ENCODE measurements at regions of chr12 and their contacts with region 1.

Region 1: DNA sequence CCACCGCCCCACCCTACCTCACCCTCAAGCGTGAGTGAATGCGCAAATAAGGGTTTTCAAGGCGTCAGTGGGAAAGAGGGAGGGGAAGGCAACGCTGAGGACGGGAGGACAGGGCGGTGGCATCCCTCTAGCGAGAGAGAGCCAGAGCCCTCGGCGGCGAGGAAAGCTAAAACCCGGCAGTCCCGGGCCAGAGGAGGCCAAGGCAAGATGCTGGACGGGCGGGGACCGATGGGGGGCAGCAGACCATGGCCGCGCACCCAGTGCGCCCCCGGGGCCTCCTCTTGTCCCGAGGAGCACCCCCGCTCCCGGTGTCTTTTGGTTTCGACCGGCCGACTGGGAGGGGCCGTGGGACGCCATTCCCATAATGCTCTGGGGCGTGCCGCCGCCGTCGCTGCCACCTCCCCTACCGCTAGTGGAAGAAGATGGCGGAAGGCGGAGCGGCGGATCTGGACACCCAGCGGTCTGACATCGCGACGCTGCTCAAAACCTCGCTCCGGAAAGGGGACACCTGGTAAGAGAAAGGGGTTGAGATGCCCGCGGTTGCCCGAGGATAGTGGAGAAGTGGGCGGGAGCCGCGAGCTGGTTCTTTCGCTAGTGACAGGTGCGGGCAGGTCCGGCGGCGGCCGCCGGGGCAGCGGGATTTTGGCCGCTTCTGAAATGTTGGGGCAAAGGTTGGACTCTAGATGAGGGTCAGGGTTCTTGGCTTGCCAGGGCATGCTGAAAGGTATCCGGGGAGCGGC is at the start of gene USP15:
- DNase-seq: peak; percentile 93 to 98 (median 96)
- ATAC-seq: peak; percentile 76
- H3K4me3 ChIP-seq: peak within 1 kb of the TSS; percentile 78 to 92
- H3K4me3 Mint-ChIP-seq: peak within 1 kb of the TSS; percentile 95
- H3K27ac ChIP-seq: peak within 1 kb of the TSS; percentile 92 to 97
- H3K27ac Mint-ChIP-seq: peak within 1 kb of the TSS; percentile 99
- H3K4me1 ChIP-seq: peaks cover 58% of the 10 kb centered on the region
- H3K4me1 Mint-ChIP-seq: peaks cover 64% of the 10 kb centered on the region
- H3K27me3 ChIP-seq: no peaks in the 10 kb centered on the region
- H3K27me3 Mint-ChIP-seq: no peaks in the 10 kb centered on the region
- CTCF ChIP-seq: peak; percentile 16
- total RNA-seq, gene USP15: 213 to 224 TPM

Region 2: DNA sequence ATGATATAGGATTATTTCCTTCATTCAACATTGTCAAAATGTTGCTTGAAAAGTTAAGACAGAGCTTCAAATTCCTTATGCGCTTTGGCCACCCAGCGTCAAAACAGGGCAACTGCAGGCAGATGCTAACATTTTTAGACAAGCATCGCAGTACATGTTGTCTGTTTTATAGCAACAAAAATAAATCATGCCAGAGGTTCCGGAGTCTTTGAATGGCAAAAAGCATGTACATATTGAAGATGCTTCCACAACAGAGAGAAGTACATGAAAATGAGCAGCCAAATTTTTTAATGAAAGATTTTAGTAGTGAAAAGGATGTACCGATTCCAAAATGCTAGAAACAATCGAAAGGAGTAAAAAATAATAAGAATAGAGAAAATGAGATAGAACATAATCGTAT is 49.7 kb before region 1 on chr12:
- CTCF ChIA-PET with region 1: no interaction called
- POLR2A ChIA-PET with region 1: interaction called, 4 read pairs
- intact Hi-C with region 1: loop called in 1 of 2 experiments (anchors 5 kb)
- DNase-seq: peak in 7 of 9 experiments; percentile 18 to 56 (median 39)
- ATAC-seq: peak; percentile 70
- H3K4me3 ChIP-seq: no peak overlapping the region
- H3K4me3 Mint-ChIP-seq: no peak overlapping the region
- H3K27ac ChIP-seq: no peak overlapping the region
- H3K27ac Mint-ChIP-seq: no peak overlapping the region
- H3K4me1 ChIP-seq: peaks cover 6% of the 10 kb centered on the region
- H3K4me1 Mint-ChIP-seq: peaks cover 9% of the 10 kb centered on the region
- H3K27me3 ChIP-seq: no peaks in the 10 kb centered on the region
- H3K27me3 Mint-ChIP-seq: no peaks in the 10 kb centered on the region
- CTCF ChIP-seq: peak; percentile 89

Region 3: GRCh38 chr12:62301080-62301798 is 41.1 kb after region 1 on chr12:
- CTCF ChIA-PET with region 1: no interaction called
- POLR2A ChIA-PET with region 1: no interaction called
- intact Hi-C with region 1: loop called (anchors 5 kb)
- DNase-seq: no peak
- ATAC-seq: no peak
- H3K4me3 ChIP-seq: no peak overlapping the region
- H3K4me3 Mint-ChIP-seq: no peak overlapping the region
- H3K27ac ChIP-seq: no peak overlapping the region
- H3K27ac Mint-ChIP-seq: no peak overlapping the region
- H3K4me1 ChIP-seq: no peaks in the 10 kb centered on the region
- H3K4me1 Mint-ChIP-seq: peaks cover 66% of the 10 kb centered on the region
- H3K27me3 ChIP-seq: no peaks in the 10 kb centered on the region
- H3K27me3 Mint-ChIP-seq: no peaks in the 10 kb centered on the region
- CTCF ChIP-seq: no peak

Region 4: DNA sequence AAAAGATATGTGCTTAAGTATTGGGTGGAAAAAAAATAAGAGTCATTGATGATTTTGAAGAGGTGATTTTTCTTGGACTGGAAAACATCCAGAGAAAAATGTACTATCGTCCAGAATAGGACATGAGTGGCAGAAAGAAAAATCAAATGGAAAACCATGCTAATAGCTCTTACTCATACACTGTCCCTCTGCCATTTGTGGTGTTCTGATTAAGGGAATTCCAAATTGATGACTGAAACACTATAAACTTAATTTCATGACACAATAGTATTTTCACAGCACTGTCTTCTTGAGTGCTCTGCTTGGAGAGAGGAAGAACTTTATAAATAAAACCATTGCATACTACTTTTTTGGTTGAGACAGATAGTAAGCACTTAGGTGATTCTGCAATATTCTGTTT is 72.4 kb after region 1 on chr12:
- CTCF ChIA-PET with region 1: no interaction called
- POLR2A ChIA-PET with region 1: no interaction called
- intact Hi-C with region 1: loop called in 1 of 2 experiments (anchors 5 kb)
- DNase-seq: no peak
- ATAC-seq: no peak
- H3K4me3 ChIP-seq: no peak overlapping the region
- H3K4me3 Mint-ChIP-seq: no peak overlapping the region
- H3K27ac ChIP-seq: no peak overlapping the region
- H3K27ac Mint-ChIP-seq: no peak overlapping the region
- H3K4me1 ChIP-seq: no peaks in the 10 kb centered on the region
- H3K4me1 Mint-ChIP-seq: peaks cover 43% of the 10 kb centered on the region
- H3K27me3 ChIP-seq: no peaks in the 10 kb centered on the region
- H3K27me3 Mint-ChIP-seq: no peaks in the 10 kb centered on the region
- CTCF ChIP-seq: no peak

Region 5: GRCh38 chr12:62466594-62467491 is 206.7 kb after region 1 on chr12 and contains the start of gene MON2:
- CTCF ChIA-PET with region 1: no interaction called
- POLR2A ChIA-PET with region 1: interaction called, 7 read pairs
- intact Hi-C with region 1: loop called (anchors 1 to 5 kb)
- DNase-seq: peak; percentile 71 to 94 (median 86)
- ATAC-seq: peak; percentile 92
- H3K4me3 ChIP-seq: peak within 1 kb of the TSS; percentile 96 to 98
- H3K4me3 Mint-ChIP-seq: peak within 1 kb of the TSS; percentile 92
- H3K27ac ChIP-seq: peak within 1 kb of the TSS; percentile 85 to 96
- H3K27ac Mint-ChIP-seq: peak within 1 kb of the TSS; percentile 93
- H3K4me1 ChIP-seq: peaks cover 31% of the 10 kb centered on the region
- H3K4me1 Mint-ChIP-seq: peaks cover 29% of the 10 kb centered on the region
- H3K27me3 ChIP-seq: peaks cover 0 to 2% of the 10 kb centered on the region in 2 experiments
- H3K27me3 Mint-ChIP-seq: no peaks in the 10 kb centered on the region
- CTCF ChIP-seq: no peak
- total RNA-seq, gene MON2: 44.2 to 48.9 TPM

Region 6: GRCh38 chr12:62581288-62582064 is 321.3 kb after region 1 on chr12:
- CTCF ChIA-PET with region 1: no interaction called
- POLR2A ChIA-PET with region 1: no interaction called
- intact Hi-C with region 1: no loop called
- DNase-seq: peak in 2 of 9 experiments; percentile 53 to 67
- ATAC-seq: peak; percentile 59
- H3K4me3 ChIP-seq: no peak overlapping the region
- H3K4me3 Mint-ChIP-seq: no peak overlapping the region
- H3K27ac ChIP-seq: no peak overlapping the region
- H3K27ac Mint-ChIP-seq: no peak overlapping the region
- H3K4me1 ChIP-seq: no peaks in the 10 kb centered on the region
- H3K4me1 Mint-ChIP-seq: no peaks in the 10 kb centered on the region
- H3K27me3 ChIP-seq: no peaks in the 10 kb centered on the region
- H3K27me3 Mint-ChIP-seq: no peaks in the 10 kb centered on the region
- CTCF ChIP-seq: peak; percentile 66

Region 7: DNA sequence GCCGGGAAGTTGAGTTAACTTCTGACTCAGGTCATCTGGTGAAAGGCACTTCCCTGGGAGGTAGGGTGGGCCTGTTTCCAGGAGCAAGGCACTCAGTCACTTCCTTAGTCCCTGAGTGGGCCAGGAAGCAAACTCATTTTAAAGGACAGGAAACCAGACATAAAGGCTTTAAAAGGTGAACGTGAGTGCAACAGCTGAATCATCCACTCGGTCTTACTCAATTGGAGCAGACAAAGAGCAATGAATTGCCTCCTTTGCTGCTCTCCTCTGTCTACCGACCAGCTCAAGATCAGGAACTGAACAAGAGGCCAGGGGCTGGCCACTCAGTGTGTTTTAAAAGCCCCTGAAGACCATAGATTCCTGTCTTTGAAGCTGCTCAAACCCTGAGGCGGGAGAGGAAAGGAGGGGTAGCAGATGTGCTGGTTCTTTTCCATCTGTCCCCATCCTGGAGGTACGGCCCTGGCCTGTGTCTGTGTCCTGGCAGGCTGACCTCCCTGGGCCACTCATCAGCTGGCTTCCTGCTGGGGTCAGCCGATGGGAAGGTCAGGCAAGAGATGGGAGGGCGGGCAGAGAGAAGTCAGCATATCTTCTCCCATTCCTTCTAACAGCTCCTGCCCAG is 525.9 kb after region 1 on chr12:
- CTCF ChIA-PET with region 1: no interaction called
- POLR2A ChIA-PET with region 1: no interaction called
- intact Hi-C with region 1: no loop called
- DNase-seq: peak in 1 of 9 experiments; percentile 5
- ATAC-seq: no peak
- H3K4me3 ChIP-seq: no peak overlapping the region
- H3K4me3 Mint-ChIP-seq: no peak overlapping the region
- H3K27ac ChIP-seq: no peak overlapping the region
- H3K27ac Mint-ChIP-seq: no peak overlapping the region
- H3K4me1 ChIP-seq: no peaks in the 10 kb centered on the region
- H3K4me1 Mint-ChIP-seq: peaks cover 5% of the 10 kb centered on the region
- H3K27me3 ChIP-seq: no peaks in the 10 kb centered on the region
- H3K27me3 Mint-ChIP-seq: no peaks in the 10 kb centered on the region
- CTCF ChIP-seq: no peak

Measured in CD8-positive, alpha-beta T cell (primary cell).